ENCODE measurements at regions of chr1 and their contacts with region 1.

Region 1: GRCh38 chr1:76176020-76176419 is 101.5 kb downstream of the ST6GALNAC3 start:
- DNase-seq: no peak
- H3K4me3 ChIP-seq: no peak overlapping the region
- H3K27ac ChIP-seq: no peak overlapping the region
- H3K4me1 ChIP-seq: no peaks in the 10 kb centered on the region
- H3K27me3 ChIP-seq: no peaks in the 10 kb centered on the region
- CTCF ChIP-seq: no peak
- EP300 ChIP-seq: no peak
- POLR2A ChIP-seq: no peak

Region 2: DNA sequence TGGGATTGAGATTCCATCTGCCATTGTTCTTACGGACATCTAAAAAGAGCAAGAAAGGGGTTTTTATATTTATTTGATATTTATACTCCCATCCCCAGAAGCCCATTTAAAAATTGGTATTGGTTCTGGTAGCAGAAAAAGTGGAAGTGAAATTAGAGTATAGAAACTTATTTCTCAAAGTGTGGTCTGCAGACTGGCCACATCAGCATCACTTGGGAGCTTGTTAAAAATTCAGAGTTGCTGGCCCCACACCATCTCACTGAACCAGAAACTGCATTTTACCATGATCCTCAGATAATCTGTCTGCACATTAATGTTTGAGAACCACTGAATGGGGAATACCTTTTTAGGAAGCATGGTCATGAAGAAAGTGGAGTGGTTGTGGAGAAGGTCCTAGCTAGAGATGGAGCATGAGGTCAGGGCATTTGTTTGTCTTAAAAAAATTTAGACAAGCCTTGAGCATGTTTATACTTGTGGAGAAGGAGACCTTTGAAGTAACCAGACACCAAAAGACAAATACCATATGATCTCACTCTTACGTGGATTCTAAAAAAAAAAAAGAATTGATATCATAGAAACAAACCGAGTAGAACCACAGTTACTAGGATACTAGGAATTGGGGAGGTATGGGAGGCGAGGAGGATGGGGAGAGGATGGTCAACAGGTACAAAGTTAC is 14.9 kb after region 1 on chr1:
- in situ Hi-C with region 1: no loop called
- intact Hi-C with region 1: loop called (anchors 1 kb)
- DNase-seq: no peak
- H3K4me3 ChIP-seq: no peak overlapping the region
- H3K27ac ChIP-seq: no peak overlapping the region
- H3K4me1 ChIP-seq: no peaks in the 10 kb centered on the region
- H3K27me3 ChIP-seq: no peaks in the 10 kb centered on the region
- CTCF ChIP-seq: no peak
- EP300 ChIP-seq: no peak
- POLR2A ChIP-seq: no peak

Measured in transverse colon (tissue), 4 donors.